HepG2 (cell line): ENCODE measurements at regions of chr10 and their contacts with region 1.

Region 1: DNA sequence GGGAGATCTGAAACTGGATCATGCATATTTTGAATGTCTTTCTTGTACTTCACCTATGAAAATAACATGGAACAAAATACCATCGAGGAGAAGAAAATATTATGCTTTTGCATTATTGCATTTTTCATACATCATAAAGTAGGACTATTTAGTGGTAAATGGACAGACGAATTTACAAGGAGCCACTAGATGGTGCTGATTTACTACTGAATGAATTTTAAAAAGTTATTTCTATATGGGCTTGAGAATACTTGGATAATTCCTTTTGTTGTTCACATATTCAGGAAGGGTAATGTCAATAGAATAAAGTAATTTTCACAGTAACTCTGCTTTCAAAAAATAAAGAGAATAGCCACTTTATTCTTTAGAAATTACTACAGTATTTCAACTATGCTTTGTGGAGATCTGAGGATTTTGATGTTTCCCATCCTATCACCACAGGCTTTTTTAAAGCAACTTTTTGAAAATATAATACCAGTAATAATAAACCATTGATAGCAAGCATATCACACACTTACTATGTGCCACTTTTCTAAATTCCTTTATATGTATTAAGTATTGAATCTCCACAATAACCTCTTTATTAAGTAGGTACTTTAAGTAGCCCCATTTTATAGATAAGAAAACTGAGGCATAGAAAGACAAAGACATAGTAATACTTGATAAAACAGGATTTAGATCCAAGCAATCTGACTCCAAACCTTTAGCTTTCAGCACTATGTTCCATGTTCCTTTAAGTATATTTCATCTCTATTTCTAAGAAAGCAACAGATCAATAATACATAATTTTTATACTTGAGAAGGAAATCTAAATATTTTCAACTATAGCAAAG is 38.6 kb downstream of the NEBL start:
- DNase-seq: peak; percentile 12
- ATAC-seq: peak; percentile 56; the same call in 2 of the 3 replicates
- H3K4me3 ChIP-seq: no peak overlapping the region
- H3K27ac ChIP-seq: no peak overlapping the region
- H3K4me1 ChIP-seq: no peaks in the 10 kb centered on the region
- H3K27me3 ChIP-seq: no peaks in the 10 kb centered on the region
- CTCF ChIP-seq: peak; percentile 52
- EP300 ChIP-seq: no peak
- POLR2A ChIP-seq: no peak
- RAD21 ChIP-seq: no peak

Region 2: DNA sequence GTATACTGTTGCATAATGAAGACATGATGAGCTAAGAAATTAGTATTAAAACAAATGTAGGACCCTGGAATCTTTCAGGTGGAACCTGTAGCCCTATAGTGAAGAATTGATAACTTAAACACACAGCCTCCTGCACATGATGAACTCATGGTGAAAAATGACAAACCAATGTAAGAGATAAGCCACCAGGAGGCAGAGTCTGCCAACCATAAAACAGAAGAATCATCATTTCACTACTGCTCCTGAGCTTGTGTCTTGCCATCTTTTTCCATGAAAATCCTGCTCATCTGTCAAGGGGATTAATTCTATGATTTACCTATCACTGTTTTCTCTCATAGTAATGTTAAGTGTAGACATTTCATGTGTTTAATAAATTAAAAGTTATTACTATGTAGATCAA is 1446.0 kb before region 1 on chr10:
- CTCF ChIA-PET with region 1: no interaction called
- POLR2A ChIA-PET with region 1: no interaction called
- in situ Hi-C with region 1: no loop called
- intact Hi-C with region 1: loop called (anchors 10 kb)
- DNase-seq: peak; percentile 16
- ATAC-seq: peak; percentile 45; the same call in 1 of the 3 replicates
- H3K4me3 ChIP-seq: no peak overlapping the region
- H3K27ac ChIP-seq: no peak overlapping the region
- H3K4me1 ChIP-seq: no peaks in the 10 kb centered on the region
- H3K27me3 ChIP-seq: no peaks in the 10 kb centered on the region
- CTCF ChIP-seq: peak; percentile 48
- EP300 ChIP-seq: no peak
- POLR2A ChIP-seq: no peak
- RAD21 ChIP-seq: no peak

Region 3: DNA sequence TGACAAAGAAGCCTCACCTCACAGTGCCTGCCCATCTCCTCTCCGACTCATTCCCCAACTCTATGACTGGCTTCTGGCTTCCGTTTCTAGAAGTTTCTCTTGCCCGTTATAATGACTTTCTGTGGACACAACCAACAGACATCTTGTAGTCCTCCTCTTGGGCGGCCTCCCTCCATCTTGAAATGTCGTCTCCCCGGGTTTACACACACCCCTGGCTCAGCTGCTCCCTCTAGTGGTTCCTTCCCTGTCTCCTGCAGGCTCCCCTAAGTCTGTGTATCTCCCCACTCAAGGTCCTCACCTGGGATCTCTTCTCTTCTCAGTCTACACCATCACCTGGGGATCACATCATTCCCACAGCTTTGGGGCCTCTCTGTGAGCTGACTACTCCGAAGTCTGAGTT is 162.0 kb after region 1 on chr10:
- CTCF ChIA-PET with region 1: no interaction called
- POLR2A ChIA-PET with region 1: no interaction called
- in situ Hi-C with region 1: no loop called
- intact Hi-C with region 1: loop called (anchors 2 kb)
- DNase-seq: peak; percentile 27
- ATAC-seq: peak; percentile 77
- H3K4me3 ChIP-seq: no peak overlapping the region
- H3K27ac ChIP-seq: no peak overlapping the region
- H3K4me1 ChIP-seq: no peaks in the 10 kb centered on the region
- H3K27me3 ChIP-seq: peaks cover 0 to 30% of the 10 kb centered on the region in 2 experiments; a peak in 3 of 5 replicates
- CTCF ChIP-seq: peak; percentile 55
- EP300 ChIP-seq: no peak
- POLR2A ChIP-seq: no peak
- RAD21 ChIP-seq: no peak

Region 4: GRCh38 chr10:21078410-21079329 is 220.2 kb after region 1 on chr10:
- CTCF ChIA-PET with region 1: no interaction called
- POLR2A ChIA-PET with region 1: no interaction called
- in situ Hi-C with region 1: no loop called
- intact Hi-C with region 1: loop called (anchors 1 kb)
- DNase-seq: peak; percentile 61
- ATAC-seq: peak; percentile 96
- H3K4me3 ChIP-seq: no peak overlapping the region
- H3K27ac ChIP-seq: no peak overlapping the region
- H3K4me1 ChIP-seq: no peaks in the 10 kb centered on the region
- H3K27me3 ChIP-seq: no peaks in the 10 kb centered on the region
- CTCF ChIP-seq: peak; percentile 85
- EP300 ChIP-seq: no peak
- POLR2A ChIP-seq: no peak
- RAD21 ChIP-seq: peak; percentile 69; the same call in 1 of the 2 replicates

Region 5: GRCh38 chr10:21265621-21266020 is 407.1 kb after region 1 on chr10:
- CTCF ChIA-PET with region 1: interaction called, 23 read pairs
- POLR2A ChIA-PET with region 1: no interaction called
- in situ Hi-C with region 1: loop called (anchors 5 kb)
- intact Hi-C with region 1: no loop called
- DNase-seq: peak; percentile 28
- ATAC-seq: no peak
- H3K4me3 ChIP-seq: no peak overlapping the region
- H3K27ac ChIP-seq: no peak overlapping the region
- H3K4me1 ChIP-seq: no peaks in the 10 kb centered on the region
- H3K27me3 ChIP-seq: 0 out of 5 replicates have a peak, but pooled peaks cover 0 to 13% of the 10 kb centered on the region in 2 experiments
- CTCF ChIP-seq: no peak
- EP300 ChIP-seq: no peak
- POLR2A ChIP-seq: no peak
- RAD21 ChIP-seq: no peak